RWPE1 (cell line): ENCODE measurements at regions of chr11 and their contacts with region 1.

Region 1: DNA sequence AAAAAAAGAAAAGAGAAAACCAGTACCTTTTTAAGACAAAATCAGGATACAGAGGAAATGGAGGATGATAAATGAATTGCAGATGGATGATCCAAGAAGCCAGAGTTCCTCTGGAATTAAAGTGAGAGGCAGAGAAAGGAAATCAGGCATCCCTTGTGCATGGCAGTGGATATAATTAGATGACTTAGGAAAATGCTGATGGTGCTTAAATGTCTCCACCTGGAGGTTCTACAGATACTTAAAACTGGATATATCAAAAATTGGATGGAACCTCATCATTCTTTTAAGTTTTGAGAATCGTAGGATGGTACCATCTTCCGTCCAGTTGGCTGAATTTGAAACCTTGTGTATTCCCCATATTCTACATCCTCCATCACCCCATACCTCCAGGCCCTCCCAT is 1040.0 kb downstream of the NTM start:
- DNase-seq: no peak
- H3K27ac ChIP-seq: no peak overlapping the region
- CTCF ChIP-seq: no peak

Region 2: GRCh38 chr11:132186699-132187098 is 223.7 kb before region 1 on chr11:
- CTCF ChIA-PET with region 1: interaction called, 11 read pairs
- POLR2A ChIA-PET with region 1: no interaction called
- DNase-seq: no peak
- H3K27ac ChIP-seq: no peak overlapping the region
- CTCF ChIP-seq: no peak

Region 3: DNA sequence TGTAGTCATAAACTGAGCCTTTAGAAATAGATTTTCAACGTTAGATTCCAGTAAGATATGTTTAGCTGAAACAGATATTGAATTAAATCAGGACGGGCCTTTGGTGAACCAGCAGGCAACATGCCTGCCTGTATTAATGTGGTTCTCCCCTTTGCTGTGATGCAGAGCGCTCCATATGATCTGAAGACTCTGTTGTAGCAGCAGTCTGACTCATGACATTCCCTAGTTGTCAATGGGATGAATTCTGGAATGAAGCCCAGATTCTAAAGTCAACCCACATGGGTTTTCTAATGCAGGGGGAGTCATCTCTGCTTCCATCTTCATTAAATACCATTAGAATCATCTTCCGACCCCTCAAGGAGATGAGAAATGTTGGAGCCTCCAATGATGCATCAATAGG is 175.5 kb before region 1 on chr11:
- CTCF ChIA-PET with region 1: no interaction called
- POLR2A ChIA-PET with region 1: no interaction called
- DNase-seq: no peak
- H3K27ac ChIP-seq: no peak overlapping the region
- CTCF ChIP-seq: no peak